OCI-LY7 (cell line): ENCODE measurements at regions of chr10 and their contacts with region 1.

Region 1: GRCh38 chr10:11515596-11516430 is 95.6 kb downstream of the USP6NL start:
- DNase-seq: peak; percentile 84
- H3K4me3 ChIP-seq: peak overlapping the region; percentile 35
- H3K27ac ChIP-seq: peak overlapping the region; percentile 65
- H3K4me1 ChIP-seq: peaks cover 30% of the 10 kb centered on the region
- CTCF ChIP-seq: peak; percentile 100

Region 2: DNA sequence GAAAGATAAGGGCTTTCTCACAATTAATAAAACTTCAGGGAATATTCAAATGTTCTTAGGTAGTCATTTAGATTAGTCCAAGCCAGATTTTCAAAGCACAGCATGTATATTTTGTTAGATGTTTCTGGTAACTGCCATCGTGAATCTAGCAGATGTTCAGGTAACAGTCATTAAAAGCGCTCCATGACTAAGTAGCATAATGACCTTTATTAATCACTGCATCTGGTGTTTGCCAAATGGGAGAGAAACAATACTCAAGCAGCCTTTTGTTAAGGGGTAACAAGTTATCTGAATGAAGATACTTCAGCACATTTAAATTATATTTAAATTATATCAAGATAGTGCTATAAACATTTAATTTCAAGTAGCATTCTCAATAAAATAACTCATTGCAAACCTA is 48.1 kb after region 1 on chr10:
- CTCF ChIA-PET with region 1: no interaction called
- POLR2A ChIA-PET with region 1: no interaction called
- intact Hi-C with region 1: no loop called
- DNase-seq: no peak
- H3K4me3 ChIP-seq: no peak overlapping the region
- H3K27ac ChIP-seq: no peak overlapping the region
- H3K4me1 ChIP-seq: peaks cover 34% of the 10 kb centered on the region
- CTCF ChIP-seq: no peak

Region 3: DNA sequence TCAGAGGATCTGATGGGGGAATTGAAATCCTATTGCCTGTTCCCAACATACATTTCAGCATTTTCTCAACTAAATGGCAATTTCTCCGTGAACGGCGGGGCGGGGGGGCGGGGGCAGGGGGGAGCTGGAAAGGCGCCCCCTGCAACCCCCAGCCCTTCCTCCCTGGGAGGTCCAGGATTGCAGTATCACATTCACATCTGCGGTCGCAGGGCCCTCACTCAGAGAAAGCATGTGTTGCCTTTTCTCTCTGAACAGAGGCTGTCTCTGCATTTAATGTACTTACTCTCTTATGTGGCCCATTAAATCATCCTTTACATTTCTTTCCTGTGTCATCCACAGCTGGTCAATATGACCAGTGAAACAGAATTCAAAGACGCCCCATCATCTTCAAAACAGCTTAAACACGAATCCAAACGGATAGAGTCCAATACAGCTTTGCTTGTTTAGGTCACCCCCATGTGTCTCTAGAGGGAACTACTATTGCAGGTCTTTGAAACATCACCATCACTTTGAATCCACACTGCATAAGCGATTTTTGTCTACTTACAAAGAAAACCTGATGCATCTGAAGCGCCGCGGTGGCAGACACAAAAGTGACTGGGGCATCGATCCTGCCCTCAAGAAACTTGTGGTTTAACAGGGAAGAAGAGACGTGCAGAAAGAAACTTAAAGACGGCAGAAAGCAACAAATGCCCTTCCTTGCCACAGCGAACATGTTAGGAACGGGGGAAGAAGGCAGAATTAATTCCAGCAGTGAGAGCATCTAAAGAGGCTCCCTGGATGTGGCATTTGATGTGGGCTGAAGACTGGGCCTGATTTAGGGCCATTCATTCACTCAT is 209.3 kb after region 1 on chr10:
- CTCF ChIA-PET with region 1: interaction called, 4 read pairs
- POLR2A ChIA-PET with region 1: interaction called, 6 read pairs
- intact Hi-C with region 1: loop called (anchors 1 kb)
- DNase-seq: peak; percentile 90
- H3K4me3 ChIP-seq: no peak overlapping the region
- H3K27ac ChIP-seq: peak overlapping the region; percentile 6
- H3K4me1 ChIP-seq: peaks cover 46% of the 10 kb centered on the region
- CTCF ChIP-seq: peak; percentile 98

Region 4: DNA sequence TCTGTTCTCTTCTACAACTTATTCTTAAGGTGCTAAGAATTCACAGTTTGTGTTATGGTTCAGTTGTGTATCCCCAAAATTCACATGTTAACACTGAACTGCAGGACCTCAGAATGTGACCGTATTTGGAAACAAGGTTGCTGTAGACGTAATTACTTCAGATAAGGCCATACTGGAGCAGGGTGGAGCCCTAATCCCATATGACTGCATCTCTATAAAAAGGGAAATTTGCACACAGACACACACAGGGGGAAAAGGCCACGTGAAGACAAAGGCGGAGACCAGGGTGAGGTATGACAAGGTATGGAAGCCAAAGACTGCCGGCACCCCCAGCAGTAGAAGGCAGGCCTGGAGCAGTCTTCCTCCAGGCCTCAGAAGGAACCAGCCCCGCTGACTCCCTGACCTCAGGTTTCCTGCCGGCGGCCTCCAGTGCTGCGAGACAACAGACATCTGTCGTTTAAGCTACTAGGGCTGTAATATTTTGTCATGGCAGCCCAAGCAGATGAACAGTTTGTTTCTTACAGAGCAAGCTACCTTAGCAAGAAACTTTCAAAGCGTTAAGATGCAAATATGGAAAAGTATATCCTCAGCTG is 406.1 kb after region 1 on chr10:
- CTCF ChIA-PET with region 1: no interaction called
- POLR2A ChIA-PET with region 1: no interaction called
- intact Hi-C with region 1: no loop called
- DNase-seq: no peak
- H3K4me3 ChIP-seq: no peak overlapping the region
- H3K27ac ChIP-seq: no peak overlapping the region
- H3K4me1 ChIP-seq: no peaks in the 10 kb centered on the region
- CTCF ChIP-seq: no peak